Astrocyte of the cerebellum (primary cell): ENCODE measurements at regions of chr15 and their contacts with region 1.

Region 1: DNA sequence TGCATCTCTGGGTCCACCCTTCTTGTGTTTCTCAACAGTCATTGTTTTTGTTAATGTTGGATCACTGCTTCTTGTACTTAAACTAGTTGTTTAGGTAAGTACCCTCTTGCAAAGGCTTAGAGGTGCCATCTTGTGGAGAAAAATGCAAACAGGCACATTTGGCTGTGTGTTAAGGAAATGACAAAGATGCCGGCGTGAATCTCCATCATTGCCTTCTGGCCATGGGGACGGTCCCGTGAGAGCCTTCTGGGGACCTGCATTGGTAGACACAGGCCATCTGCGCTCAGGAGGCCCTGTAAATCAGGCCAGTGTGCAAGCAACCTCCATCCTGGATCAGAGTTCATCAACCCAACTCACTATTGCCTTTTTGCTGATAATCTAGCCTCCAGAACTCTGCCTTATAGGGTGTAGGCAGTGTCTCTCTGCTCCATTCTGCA is 158.6 kb upstream of the NR2E3 start:
- DNase-seq: peak; percentile 65
- H3K4me3 ChIP-seq: no peak overlapping the region
- CTCF ChIP-seq: peak; percentile 61

Region 2: GRCh38 chr15:71596672-71597071 is 55.1 kb before region 1 on chr15:
- in situ Hi-C with region 1: loop called (anchors 5 kb)
- DNase-seq: peak; percentile 78
- H3K4me3 ChIP-seq: no peak overlapping the region
- CTCF ChIP-seq: no peak